Dorsolateral prefrontal cortex (tissue), 120 donors: ENCODE measurements at regions of chr14 and their contacts with region 1.

Region 1: DNA sequence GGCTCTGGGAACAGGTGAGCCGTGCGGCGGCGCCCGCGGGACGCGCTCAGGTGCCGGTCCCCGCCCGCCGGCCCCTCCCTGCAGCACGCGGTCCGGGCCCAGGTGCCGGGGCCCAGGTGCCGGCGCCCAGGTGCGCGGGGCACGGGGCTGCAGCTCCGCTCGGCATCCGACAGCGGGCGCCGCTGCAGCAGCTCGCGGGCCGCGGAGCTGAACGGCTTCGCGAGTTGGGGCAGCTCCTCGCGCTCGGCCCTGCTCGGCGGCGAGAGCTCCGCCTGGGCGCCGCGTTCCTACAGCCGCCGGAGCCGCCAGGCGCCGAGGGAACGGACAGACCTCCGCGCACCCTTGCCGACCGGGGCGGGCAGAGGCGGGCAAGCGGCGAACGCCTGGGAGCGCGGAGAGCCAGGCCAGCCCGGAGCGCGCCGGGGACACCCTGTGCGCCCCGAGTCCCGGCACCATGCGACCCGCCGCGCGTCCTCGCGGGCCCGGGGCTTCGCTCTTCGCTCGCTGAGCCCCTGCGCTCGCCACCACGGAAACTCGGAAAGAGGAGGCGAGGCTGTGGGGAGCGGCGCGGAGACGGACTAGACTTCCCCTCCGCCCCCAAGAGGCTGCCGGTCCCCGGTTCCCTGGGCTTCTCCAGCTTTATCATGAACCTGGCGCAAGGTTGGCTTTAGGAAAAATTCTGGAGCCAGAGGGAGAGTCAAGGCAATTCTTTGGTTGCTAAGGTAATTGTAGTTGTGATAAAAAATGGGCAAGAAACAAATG is at the start of gene RGS6:
- DNase-seq: peak in 4 of 10 donors; percentile 6 to 67 (median 42)
- H3K4me3 ChIP-seq: peak within 1 kb of the TSS; percentile 39 to 77 (median 62)
- H3K27ac ChIP-seq: peak within 1 kb of the TSS in 50 of 59 donors; percentile 12 to 87 (median 70)
- H3K27me3 ChIP-seq: peaks cover 0 to 59% (median 13%) of the 10 kb centered on the region in 45 donors
- CTCF ChIP-seq: peak in 14 of 56 donors; percentile 1 to 42 (median 26)
- total RNA-seq, gene RGS6: 12.2 to 74.6 (median 41.9) TPM

Region 2: GRCh38 chr14:72291908-72292688 is 359.7 kb after region 1 on chr14:
- intact Hi-C with region 1: loop called (anchors 2 to 10 kb)
- DNase-seq: peak in 4 of 10 donors; percentile 6 to 43 (median 21)
- H3K4me3 ChIP-seq: peak overlapping the region in 34 of 59 donors; percentile 0 to 49 (median 22)
- H3K27ac ChIP-seq: peak overlapping the region in 5 of 59 donors; percentile 9 to 61 (median 33)
- H3K27me3 ChIP-seq: no peaks in the 10 kb centered on the region
- CTCF ChIP-seq: peak; percentile 34 to 80 (median 72)

Region 3: DNA sequence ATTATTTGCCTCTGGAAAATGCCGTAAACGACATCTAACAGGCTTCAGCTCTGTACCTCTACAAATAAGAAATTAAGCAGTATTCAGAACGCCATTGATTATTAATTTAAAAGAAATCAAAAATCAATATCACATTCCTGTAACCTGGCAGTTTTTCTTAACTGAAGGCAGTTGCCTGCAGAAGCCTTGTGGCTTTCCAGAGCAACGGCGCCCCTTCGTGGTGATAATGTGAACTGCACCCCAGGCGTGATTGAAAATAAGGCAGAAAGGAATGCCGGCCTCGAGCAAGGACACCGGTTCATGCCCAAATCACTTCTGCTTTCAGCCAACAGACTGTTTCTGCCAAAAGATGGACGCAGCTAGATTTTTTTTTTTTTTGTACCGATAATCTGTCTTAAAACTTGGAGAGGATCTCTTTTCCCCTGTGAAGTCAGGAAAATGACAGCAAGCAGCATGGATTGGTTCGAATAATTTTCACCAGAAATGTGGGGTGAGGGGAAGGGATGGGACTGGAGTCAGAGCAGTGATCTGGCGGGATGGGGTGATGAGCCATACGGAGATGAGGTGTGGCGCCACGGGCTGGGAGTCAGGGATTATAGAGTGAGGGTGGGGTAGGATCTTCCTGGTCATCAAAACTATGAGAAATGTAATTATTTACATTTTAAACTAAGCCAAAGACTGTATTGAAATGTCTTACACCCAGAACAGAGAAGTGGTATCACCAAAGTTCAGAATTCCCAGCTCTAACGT is 488.5 kb after region 1 on chr14:
- intact Hi-C with region 1: loop called in 1 of 2 experiments (anchors 10 kb)
- DNase-seq: peak; percentile 34 to 92 (median 80)
- H3K4me3 ChIP-seq: no peak overlapping the region
- H3K27ac ChIP-seq: no peak overlapping the region
- H3K27me3 ChIP-seq: no peaks in the 10 kb centered on the region
- CTCF ChIP-seq: peak; percentile 64 to 96 (median 86)